Right ventricle myocardium inferior (tissue), 1 donor: ENCODE measurements at regions of chr12 and their contacts with region 1.

Region 1: DNA sequence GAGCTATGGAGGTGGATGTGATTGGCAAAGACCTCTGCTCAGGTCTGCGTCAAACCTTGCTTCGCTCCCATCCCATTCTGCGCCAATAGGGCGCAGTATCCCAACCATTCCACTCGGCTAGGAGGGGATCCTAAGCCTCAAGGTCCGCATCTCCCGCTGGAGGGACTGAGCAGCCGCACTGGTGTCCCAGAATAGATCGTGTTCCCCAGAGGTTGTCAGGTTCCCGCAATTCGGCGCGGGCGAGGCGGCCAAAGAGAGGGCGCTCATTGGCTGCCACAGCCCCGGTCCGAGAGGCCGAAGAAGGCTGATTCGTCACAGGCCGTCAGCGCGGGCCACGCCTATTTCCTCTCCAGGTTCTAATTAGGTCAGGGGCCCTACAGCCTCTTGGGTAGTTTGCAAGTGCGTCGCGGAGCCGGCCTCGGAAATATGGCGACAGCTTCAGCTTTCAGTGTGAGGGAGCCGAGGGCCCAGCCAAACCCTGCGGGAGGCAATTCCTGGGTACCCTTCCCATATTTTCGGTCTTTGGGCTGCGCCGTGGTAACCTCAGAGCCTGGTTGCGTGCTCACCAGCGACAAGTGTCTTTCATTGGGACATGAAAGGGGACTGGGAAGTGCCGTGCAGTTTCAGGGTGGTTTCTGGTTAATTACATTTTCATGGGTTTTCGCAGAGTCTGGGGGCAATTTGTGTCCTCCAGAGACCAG is 5.0 kb downstream of the OR10AD1 start:
- DNase-seq: peak; percentile 99
- ATAC-seq: peak; percentile 99

Region 2: DNA sequence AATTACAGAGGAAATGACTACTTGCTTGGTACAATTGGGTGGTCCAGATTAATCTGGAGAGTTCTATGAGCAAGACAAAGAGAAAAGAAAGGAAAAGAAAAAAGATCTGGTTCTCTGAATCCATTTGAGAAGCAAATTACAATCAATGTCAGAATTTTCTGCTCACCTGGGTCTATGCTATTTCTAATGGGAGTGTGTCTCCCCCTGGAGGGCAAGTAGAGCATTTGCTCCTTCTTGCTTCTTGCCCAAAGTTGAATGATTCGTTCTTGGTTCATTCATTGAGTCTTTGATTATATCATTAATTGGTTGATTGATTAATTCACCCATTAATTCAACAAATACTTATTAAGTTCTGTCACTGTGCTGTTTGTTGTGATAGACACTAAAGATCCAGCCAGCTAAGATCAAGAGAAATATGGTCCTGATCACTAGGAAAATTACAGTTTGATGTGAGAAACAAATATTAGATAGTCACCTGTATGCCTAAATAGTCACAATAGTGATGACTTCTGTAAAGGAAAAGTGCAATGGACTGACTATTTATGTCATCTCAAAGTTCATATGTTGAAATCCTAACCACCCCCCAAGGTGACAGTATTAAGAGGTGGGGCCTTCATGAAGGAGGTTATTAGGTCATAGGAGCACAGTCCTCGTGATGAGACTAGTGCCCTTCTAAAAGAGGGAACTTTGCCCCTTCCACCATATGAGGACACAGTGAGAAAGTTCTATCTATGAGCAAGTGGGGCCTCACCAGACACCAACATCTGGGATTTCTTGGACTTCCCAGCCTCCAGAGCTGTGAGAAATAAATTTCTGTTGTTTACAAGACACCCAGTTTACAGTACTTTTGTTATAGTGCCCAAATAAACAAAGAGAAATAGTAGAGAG is 32.8 kb before region 1 on chr12:
- intact Hi-C with region 1: loop called (anchors 2 kb)
- DNase-seq: no peak
- ATAC-seq: peak; percentile 57

Region 3: GRCh38 chr12:48263617-48264016 is 65.5 kb after region 1 on chr12:
- intact Hi-C with region 1: no loop called
- DNase-seq: no peak
- ATAC-seq: no peak

Region 4: DNA sequence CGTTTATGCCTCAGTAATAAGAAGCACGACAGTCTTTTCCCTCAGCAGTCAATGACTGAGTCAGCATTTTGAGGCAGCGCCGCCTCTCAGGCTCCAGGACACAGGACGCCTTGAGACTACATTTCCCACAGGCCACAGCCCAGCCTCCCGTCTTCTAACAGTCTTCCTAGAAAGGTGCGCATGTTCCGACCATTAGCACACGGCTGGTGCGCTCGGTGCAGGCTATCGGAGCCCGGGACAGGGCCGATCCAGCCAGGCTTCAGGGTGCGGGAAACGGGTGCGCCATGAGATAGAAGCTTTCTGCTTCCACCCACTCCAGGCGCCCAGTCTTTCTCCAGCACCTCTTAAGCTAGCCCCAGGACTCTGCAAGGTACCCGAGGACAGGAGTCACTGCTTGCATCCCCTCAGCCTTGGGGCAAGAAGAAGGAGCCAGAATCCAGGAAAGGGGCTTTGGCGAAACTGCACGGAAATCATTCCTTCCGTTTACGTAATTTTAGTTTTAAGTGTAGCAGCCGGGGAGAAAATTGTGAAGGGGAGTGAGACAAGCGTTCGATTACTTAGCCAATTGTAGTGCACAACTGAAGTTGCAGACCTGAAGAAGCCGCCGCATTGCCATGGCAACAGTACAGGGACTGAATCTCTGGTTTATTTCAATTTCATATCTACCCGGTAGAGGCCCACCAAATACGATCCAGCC is 98.6 kb after region 1 on chr12:
- intact Hi-C with region 1: loop called (anchors 5 kb)
- DNase-seq: peak; percentile 90
- ATAC-seq: peak; percentile 98

Region 5: GRCh38 chr12:48350249-48351021 is 152.3 kb after region 1 on chr12 and contains the start of gene ZNF641:
- intact Hi-C with region 1: loop called (anchors 2 kb)
- DNase-seq: peak; percentile 95
- ATAC-seq: peak; percentile 95
- total RNA-seq, gene ZNF641: 17.3 TPM